ENCODE measurements at regions of chr17 and their contacts with region 1.

Region 1: DNA sequence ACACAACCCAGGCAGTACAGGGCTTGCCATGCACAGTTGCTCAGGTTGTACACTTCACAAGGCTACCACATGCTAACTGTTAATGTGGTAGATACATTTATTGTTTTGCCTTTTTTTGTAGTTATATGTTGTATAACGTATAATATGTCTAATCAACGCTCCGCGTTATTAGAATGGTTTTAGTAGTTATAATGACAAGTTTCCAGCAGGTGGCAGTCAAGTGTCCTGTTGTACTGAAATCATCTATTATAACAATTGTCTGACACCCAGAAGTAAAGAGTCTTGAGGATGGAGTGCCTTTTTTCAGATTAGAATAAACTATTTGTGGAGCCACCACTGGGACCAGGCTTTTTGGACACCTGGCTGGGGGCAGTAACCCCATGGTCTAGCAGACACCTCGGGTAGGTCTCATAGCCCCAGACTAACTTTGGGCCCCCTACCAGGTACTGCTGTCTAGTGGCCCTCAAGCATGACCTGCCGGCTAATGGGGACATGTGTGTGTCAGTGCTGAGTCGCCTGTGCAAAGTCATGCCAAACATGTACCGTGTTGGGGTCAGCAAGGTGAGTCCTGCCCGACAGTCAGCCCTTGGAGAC is 32.8 kb downstream of the MYO15A start:
- DNase-seq: no peak
- ATAC-seq: no peak
- H3K4me3 Mint-ChIP-seq: no peak overlapping the region
- H3K27ac Mint-ChIP-seq: no peak overlapping the region
- H3K4me1 Mint-ChIP-seq: peaks cover 12% of the 10 kb centered on the region
- H3K27me3 Mint-ChIP-seq: no peaks in the 10 kb centered on the region; the same call in 1 of the 2 replicates
- CTCF ChIP-seq: no peak; the same call in 1 of the 2 replicates

Region 2: DNA sequence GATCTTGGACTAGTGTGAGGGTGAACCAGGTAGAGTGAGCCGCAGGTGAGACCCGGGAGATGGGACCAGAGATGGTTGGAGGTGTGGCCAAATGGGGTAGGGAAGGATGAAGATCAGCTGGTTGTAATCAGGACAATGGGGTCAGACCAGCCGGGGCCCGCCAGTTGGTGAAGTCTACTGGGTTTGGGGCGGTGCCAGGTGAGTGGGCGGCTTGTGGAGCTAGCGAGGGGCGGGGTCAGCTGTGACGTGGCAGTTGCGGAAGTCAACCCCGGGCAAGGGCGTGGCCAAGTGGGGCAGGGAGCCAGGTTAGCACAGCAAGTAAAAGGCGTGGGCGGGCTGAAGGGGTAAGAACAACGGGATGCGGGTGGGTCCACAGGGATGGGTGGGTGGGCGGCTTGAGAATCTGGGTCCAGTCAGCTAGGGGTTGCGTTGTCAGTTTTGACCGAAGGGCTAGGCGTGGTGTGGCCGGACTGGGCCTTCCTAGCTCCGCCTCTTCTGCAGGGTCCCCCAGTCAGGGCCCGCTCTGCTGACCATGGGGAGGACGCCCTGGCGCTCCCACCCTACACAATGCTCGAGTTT is 16.8 kb after region 1 on chr17:
- CTCF ChIA-PET with region 1: interaction called, 89 read pairs
- POLR2A ChIA-PET with region 1: no interaction called
- DNase-seq: peak; percentile 99
- ATAC-seq: peak; percentile 79
- H3K4me3 Mint-ChIP-seq: peak overlapping the region; percentile 83
- H3K27ac Mint-ChIP-seq: peak overlapping the region; percentile 96
- H3K4me1 Mint-ChIP-seq: peaks cover 7% of the 10 kb centered on the region
- H3K27me3 Mint-ChIP-seq: no peaks in the 10 kb centered on the region; the same call in 1 of the 2 replicates
- CTCF ChIP-seq: no peak

Region 3: GRCh38 chr17:18183334-18184142 is 42.2 kb after region 1 on chr17 and contains the start of gene ALKBH5:
- CTCF ChIA-PET with region 1: interaction called, 44 read pairs
- POLR2A ChIA-PET with region 1: interaction called, 4 read pairs
- DNase-seq: peak; percentile 95
- ATAC-seq: peak; percentile 91
- H3K4me3 Mint-ChIP-seq: peak within 1 kb of the TSS; percentile 93
- H3K27ac Mint-ChIP-seq: peak within 1 kb of the TSS; percentile 99
- H3K4me1 Mint-ChIP-seq: peaks cover 45% of the 10 kb centered on the region
- H3K27me3 Mint-ChIP-seq: no peaks in the 10 kb centered on the region
- CTCF ChIP-seq: peak; percentile 18; the same call in 1 of the 2 replicates
- total RNA-seq, gene ALKBH5: 105 to 115 TPM (median 111 TPM) in 3 replicates

Region 4: DNA sequence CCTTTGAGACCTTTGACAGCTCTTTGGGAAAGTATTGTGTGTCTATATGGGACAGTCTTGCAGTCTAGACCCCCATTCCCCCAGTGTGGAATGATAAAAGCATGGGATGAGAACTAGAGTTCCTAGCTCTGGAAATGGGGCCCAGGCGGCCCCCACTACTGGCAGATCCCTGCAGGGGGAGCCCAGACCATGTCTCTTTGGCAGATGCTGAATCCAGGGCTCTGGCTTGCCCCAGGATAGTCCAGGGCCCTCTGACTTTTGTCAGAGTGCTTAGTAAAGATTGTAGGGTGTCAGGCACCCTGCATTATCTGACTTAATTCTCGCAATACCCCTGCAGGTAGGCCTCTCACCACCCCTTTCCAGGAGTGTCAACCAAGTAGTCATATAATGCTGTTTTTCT is 50.7 kb after region 1 on chr17:
- CTCF ChIA-PET with region 1: interaction called, 10 read pairs
- POLR2A ChIA-PET with region 1: no interaction called
- DNase-seq: peak; percentile 38
- ATAC-seq: peak; percentile 86
- H3K4me3 Mint-ChIP-seq: no peak overlapping the region
- H3K27ac Mint-ChIP-seq: no peak overlapping the region
- H3K4me1 Mint-ChIP-seq: peaks cover 22% of the 10 kb centered on the region
- H3K27me3 Mint-ChIP-seq: no peaks in the 10 kb centered on the region
- CTCF ChIP-seq: no peak

Region 5: DNA sequence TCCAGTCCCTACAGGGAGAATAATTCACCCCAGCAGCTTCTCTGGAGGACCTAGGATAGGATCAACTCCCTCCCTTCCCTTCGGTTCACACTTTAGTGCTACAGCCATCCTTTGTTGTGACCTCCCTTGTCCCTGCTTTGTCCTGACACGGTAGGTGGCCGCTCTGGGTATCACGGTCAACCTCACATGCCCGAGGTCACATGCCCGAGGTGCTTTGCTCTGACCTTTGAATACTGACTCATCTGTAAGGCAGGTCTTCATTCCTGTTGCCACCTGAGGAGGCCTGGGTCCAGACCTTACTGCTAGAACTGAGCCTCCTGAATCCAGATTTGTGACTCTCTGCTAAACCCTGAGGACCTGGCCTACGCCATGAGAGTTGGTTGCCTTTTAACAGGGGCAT is 62.0 kb after region 1 on chr17:
- CTCF ChIA-PET with region 1: interaction called, 12 read pairs
- POLR2A ChIA-PET with region 1: no interaction called
- DNase-seq: no peak
- ATAC-seq: peak; percentile 24; the same call in 1 of the 2 replicates
- H3K4me3 Mint-ChIP-seq: no peak overlapping the region
- H3K27ac Mint-ChIP-seq: peak overlapping the region; percentile 80; the same call in 1 of the 2 replicates
- H3K4me1 Mint-ChIP-seq: peaks cover 7% of the 10 kb centered on the region; the same call in 1 of the 2 replicates
- H3K27me3 Mint-ChIP-seq: no peaks in the 10 kb centered on the region
- CTCF ChIP-seq: no peak

Region 6: GRCh38 chr17:18217412-18218015 is 76.2 kb after region 1 on chr17:
- CTCF ChIA-PET with region 1: interaction called, 38 read pairs
- POLR2A ChIA-PET with region 1: interaction called, 3 read pairs
- DNase-seq: peak; percentile 91
- ATAC-seq: peak; percentile 95
- H3K4me3 Mint-ChIP-seq: no peak overlapping the region
- H3K27ac Mint-ChIP-seq: no peak overlapping the region
- H3K4me1 Mint-ChIP-seq: peaks cover 7% of the 10 kb centered on the region
- H3K27me3 Mint-ChIP-seq: no peaks in the 10 kb centered on the region
- CTCF ChIP-seq: peak; percentile 79

Region 7: DNA sequence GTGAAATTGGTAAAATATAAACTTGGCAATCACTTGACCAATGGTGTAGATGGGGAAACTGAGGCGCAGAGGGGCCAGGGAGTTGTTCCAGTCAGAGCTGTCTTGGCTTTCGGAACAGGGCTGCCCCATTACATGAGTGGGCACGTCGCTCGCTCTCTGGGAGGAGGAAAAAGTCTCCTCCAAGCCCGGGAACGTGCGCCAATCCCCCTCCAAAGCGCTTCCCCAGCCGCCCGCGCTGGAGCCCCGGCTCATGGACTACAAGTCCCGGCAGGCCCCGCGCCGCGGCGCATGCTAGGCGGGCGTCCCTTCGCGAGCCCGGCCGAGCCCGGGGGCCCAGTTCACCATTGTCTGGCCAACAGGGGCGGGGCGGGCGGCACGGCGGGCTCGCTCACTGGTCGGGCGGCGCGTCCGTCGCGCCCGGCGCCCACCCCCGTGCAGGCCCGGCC is 83.8 kb after region 1 on chr17:
- CTCF ChIA-PET with region 1: interaction called, 11 read pairs
- POLR2A ChIA-PET with region 1: no interaction called
- DNase-seq: peak; percentile 98
- ATAC-seq: peak; percentile 72
- H3K4me3 Mint-ChIP-seq: peak overlapping the region; percentile 93
- H3K27ac Mint-ChIP-seq: peak overlapping the region; percentile 100
- H3K4me1 Mint-ChIP-seq: peaks cover 23% of the 10 kb centered on the region
- H3K27me3 Mint-ChIP-seq: no peaks in the 10 kb centered on the region
- CTCF ChIP-seq: no peak

Measured in WTC11 (cell line).